Activated CD4-positive, alpha-beta T cell treated with anti-CD3 and anti-CD28 coated beads, Interleukin-2, amount 10 ng/mL, durations not matched to agents 24 days and 14 days (primary cell): ENCODE measurements at regions of chr2 and their contacts with region 1.

Region 1: GRCh38 chr2:9142551-9143263 is 63.9 kb upstream of the ASAP2 start:
- DNase-seq: peak; percentile 94
- H3K4me3 Mint-ChIP-seq: peak overlapping the region; percentile 55
- H3K27ac Mint-ChIP-seq: no peak overlapping the region
- H3K4me1 Mint-ChIP-seq: peaks cover 4% of the 10 kb centered on the region
- H3K27me3 Mint-ChIP-seq: peaks cover 19% of the 10 kb centered on the region

Region 2: DNA sequence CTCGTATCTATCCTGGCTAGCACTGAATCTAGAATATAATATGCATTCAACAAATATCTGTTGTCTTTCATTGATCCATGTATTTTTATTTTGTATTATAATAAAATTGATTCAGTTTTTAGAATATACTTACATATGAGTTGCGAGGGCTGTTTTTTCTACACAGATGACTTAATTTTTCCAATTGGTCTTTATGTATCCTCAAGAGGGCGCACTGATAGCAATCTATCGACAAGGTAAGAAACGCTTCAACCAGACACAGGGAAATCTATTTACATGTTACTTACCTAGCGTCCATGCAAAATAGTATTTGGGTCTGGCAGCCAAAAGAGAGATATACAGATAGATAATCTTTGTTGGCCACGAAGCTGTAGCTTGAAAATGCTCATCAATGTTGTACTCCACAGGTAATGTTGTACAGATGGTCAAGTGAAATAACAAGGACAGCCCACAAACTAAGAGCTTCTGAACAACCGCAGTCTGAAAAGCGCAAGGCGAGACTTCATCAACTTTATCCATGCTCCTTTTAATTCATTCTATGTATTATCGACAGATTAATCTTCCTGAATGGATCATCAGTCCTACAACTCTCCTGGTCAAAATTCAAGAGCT is 269.8 kb before region 1 on chr2:
- intact Hi-C with region 1: loop called (anchors 2 kb)
- DNase-seq: peak; percentile 62
- H3K4me3 Mint-ChIP-seq: no peak overlapping the region
- H3K27ac Mint-ChIP-seq: no peak overlapping the region
- H3K4me1 Mint-ChIP-seq: no peaks in the 10 kb centered on the region
- H3K27me3 Mint-ChIP-seq: peaks cover 3% of the 10 kb centered on the region

Region 3: DNA sequence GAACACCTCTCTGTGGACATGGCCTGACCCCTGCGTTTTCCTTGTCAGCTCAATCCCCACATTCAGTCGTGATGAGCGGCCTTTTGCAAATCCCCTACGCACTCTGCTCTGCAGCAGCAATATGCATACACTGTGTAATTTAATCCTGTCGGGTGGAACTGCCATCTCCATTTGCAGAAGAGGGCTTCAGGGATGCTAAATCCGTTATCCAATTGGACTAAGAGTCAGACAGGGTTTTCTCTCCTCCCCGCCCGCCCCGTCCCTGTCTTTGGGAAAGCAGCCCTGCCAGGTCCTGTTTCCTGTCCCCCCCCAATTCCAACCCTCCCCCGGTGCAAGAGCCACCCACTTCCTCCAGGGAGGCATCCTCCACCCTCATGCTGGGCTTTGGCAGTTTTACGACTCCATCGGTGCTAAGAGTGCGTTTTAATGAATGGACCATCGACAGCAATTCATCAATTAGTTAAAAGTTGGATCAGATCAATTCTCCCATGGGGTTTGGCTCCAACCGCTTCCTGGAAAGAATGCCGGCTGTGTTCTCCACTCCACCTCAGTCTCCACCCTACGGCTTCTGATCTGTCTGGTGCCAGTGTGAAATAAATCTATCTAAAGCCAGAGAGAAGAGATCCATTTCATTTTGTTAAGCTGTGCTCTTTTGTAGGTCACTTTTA is 10.4 kb after region 1 on chr2:
- intact Hi-C with region 1: no loop called
- DNase-seq: no peak
- H3K4me3 Mint-ChIP-seq: no peak overlapping the region
- H3K27ac Mint-ChIP-seq: no peak overlapping the region
- H3K4me1 Mint-ChIP-seq: no peaks in the 10 kb centered on the region
- H3K27me3 Mint-ChIP-seq: peaks cover 18% of the 10 kb centered on the region

Region 4: GRCh38 chr2:9370746-9371145 is 228.0 kb after region 1 on chr2:
- intact Hi-C with region 1: loop called (anchors 2 kb)
- DNase-seq: no peak
- H3K4me3 Mint-ChIP-seq: no peak overlapping the region
- H3K27ac Mint-ChIP-seq: peak overlapping the region; percentile 72
- H3K4me1 Mint-ChIP-seq: no peaks in the 10 kb centered on the region
- H3K27me3 Mint-ChIP-seq: peaks cover 2% of the 10 kb centered on the region

Region 5: DNA sequence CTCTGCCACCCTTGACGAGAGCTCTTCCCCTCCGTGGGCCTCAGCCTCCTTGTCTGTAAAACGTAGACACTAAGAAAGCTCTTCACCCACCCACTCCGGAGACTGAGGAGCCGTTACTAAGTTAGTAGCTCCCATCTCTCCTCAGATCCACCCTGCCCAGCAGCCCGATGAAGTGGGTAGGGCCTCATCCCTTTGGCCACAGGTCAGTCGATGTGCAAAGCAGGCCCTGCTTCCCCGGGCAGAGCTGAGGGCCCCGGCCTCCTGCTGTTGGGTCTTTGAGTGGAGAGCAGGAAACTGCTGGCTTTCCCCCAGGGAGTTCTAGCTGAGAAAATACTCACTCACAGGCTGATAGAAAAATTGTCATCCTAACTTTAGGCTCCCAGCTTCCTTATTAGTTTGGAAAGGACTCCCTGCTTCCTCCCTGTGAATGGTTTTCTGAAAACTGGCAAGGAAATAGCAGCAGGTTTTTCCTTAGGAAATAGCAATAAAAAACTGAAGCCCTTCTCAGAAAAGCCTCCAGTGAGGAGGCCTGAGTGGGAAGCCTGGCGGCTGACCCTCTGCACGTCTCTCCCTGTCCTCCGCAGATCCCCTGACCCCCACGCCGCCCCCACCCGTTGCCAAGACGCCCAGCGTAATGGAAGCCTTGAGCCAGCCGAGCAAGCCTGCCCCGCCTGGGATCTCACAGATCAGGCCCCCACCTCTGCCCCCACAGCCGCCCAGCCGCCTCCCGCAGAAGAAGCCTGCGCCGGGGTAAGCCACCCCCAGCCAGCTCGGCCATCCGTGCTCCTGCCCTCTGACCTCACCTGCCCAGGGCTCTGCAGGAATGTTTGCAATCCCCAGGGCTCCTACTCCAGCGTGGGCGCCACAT is 250.4 kb after region 1 on chr2:
- intact Hi-C with region 1: no loop called
- DNase-seq: no peak
- H3K4me3 Mint-ChIP-seq: no peak overlapping the region
- H3K27ac Mint-ChIP-seq: no peak overlapping the region
- H3K4me1 Mint-ChIP-seq: no peaks in the 10 kb centered on the region
- H3K27me3 Mint-ChIP-seq: no peaks in the 10 kb centered on the region

Region 6: DNA sequence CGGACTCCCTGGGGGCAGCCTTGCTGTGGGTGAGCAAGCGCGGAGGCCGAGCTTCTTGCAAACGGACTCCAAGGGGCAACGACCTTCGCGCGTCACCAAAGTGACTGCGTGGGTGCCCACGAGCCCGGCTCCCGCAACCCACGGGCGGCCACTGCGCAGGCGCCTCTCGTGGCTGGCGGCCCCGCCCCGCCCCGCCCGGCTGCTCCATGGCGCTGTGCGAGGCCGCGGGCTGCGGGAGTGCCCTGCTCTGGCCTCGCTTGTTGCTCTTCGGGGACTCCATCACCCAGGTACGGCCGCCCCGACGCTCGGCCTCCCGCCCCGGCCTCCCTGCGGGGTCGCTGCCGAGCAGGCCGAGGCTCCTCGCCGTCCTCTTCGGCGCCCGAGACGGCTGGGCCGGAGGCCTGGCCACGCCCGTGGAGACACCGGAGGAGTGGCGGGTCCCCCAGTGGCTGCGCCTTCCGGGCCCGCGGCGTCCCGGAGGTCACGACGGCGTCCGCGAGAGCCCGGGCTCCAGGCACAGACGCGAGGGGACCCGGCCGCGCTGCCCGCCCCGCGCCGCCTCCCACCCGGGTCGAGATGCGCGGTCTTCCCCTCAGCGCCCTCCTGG is 331.8 kb after region 1 on chr2 and contains the start of gene IAH1:
- intact Hi-C with region 1: loop called (anchors 5 kb)
- DNase-seq: peak; percentile 92
- H3K4me3 Mint-ChIP-seq: peak within 1 kb of the TSS; percentile 82
- H3K27ac Mint-ChIP-seq: peak within 1 kb of the TSS; percentile 86
- H3K4me1 Mint-ChIP-seq: peaks cover 31% of the 10 kb centered on the region
- H3K27me3 Mint-ChIP-seq: no peaks in the 10 kb centered on the region
- total RNA-seq, gene IAH1: 76.0 and 78.6 TPM in 2 replicates